Calu3 (cell line): ENCODE measurements at regions of chr7 and their contacts with region 1.

Region 1: DNA sequence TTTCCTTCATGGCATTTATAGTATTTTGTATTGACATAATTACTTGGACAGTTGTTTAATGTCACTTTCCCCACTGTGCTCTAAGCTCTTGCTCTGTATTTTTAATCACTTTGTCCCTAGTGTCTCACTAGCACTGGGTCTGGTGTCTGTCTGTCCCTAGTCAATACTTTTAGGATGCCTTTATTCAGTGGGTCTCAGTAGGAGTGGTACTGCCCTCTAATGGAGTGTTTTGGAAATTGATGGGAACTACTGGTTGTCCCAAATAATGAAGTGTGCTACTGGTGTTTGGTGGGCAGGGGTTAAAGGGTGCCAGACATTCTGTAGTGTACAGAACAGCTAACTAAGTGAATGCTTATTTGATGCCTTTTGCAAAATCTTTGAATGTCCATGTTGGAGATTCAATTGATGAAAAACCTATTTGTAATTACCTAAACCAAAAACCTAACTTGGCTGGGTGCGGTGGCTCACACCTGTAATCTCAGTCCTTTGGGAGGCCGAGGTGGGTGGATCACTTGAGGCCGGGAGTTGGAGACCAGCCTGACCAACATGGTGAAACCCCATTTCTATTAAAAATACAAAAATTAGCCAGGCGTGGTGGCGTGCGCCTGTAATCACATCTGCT is 33.3 kb downstream of the CDK14 start:
- DNase-seq: peak; percentile 34
- H3K4me3 Mint-ChIP-seq: no peak overlapping the region
- H3K27ac Mint-ChIP-seq: no peak overlapping the region
- H3K4me1 Mint-ChIP-seq: peaks cover 21% of the 10 kb centered on the region
- H3K27me3 Mint-ChIP-seq: no peaks in the 10 kb centered on the region
- CTCF ChIP-seq: no peak

Region 2: DNA sequence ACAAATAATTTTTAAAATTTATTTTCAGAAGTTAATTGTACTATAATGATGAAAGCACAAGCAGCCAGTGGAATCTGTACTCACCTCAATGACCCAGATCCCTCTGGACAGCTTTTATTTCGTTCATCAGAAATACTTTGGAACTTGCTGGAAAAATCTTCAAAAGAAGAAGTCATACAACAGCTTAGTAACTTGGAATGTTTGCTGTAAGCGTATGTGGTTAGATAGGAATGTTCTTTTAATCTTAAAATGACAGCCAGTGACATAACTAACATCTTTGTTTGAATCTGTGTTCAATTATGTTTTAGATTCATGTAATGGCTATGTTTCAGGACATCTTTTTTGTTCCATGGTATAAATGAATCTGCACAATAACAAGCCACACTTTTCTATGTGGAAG is 357.7 kb before region 1 on chr7:
- CTCF ChIA-PET with region 1: no interaction called
- intact Hi-C with region 1: no loop called
- DNase-seq: no peak
- H3K4me3 Mint-ChIP-seq: no peak overlapping the region
- H3K27ac Mint-ChIP-seq: no peak overlapping the region
- H3K4me1 Mint-ChIP-seq: peaks cover 13% of the 10 kb centered on the region
- H3K27me3 Mint-ChIP-seq: no peaks in the 10 kb centered on the region
- CTCF ChIP-seq: no peak

Region 3: DNA sequence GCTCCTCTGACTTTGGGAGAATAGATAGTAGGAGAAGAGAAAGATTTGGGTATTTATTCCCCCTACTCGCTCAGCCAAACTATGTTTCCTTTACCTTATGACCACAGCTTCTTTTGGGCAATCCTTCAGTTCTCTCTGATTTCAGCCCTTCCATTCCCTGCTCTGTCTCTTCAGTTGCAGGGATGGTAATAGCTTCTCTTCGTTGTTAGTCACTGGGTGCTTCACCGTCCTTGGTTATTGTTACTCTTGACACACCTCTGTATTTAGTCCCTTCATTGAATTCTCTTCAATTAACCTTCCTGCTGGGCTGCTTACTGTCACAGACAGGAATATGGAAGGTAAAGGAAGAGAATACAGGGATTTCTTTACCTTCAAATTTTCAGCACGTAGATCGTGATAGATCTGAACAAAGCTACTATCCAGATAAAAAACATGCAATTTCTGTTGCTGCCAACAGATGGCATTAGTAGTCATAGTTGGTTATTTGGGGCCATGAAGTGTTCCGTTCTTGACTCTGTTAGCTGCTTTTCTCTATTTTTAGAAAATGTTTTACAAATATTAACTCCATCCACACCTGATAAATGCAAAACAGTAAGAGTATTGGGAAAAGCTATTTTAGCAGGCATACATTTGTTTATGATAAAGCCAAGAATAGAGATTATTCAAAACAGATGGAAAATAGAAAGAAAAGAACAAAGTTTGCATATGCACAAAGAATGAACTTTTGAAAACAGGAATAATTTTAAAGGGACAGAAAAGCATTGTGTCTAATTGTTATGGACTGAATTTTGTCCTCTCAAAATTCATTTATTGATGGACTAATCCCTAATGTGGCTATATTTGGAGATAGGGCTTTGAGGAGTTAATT is 174.0 kb before region 1 on chr7:
- CTCF ChIA-PET with region 1: interaction called, 14 read pairs
- intact Hi-C with region 1: loop called (anchors 2 kb)
- DNase-seq: peak; percentile 8
- H3K4me3 Mint-ChIP-seq: peak overlapping the region; percentile 58
- H3K27ac Mint-ChIP-seq: no peak overlapping the region
- H3K4me1 Mint-ChIP-seq: peaks cover 10% of the 10 kb centered on the region
- H3K27me3 Mint-ChIP-seq: no peaks in the 10 kb centered on the region
- CTCF ChIP-seq: peak; percentile 44

Region 4: DNA sequence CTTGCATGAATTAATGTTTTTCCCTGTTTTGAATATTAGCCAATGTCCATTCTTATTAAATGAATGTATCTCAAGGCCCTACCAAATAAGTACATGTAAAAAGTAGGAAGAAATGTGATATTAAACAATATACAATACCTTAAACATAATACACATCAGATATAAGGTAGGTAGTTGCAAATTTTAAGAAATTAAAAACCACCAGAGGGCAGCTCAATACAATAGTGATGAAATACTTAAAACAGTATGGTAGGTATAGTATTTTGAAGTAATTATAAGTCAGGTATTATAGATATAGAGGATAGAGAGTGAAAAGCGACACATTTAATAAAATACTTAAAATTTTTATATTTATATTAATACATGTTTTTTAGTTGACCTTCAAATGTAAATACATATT is 76.9 kb before region 1 on chr7:
- CTCF ChIA-PET with region 1: no interaction called
- intact Hi-C with region 1: loop called (anchors 2 kb)
- DNase-seq: no peak
- H3K4me3 Mint-ChIP-seq: no peak overlapping the region
- H3K27ac Mint-ChIP-seq: no peak overlapping the region
- H3K4me1 Mint-ChIP-seq: no peaks in the 10 kb centered on the region
- H3K27me3 Mint-ChIP-seq: no peaks in the 10 kb centered on the region
- CTCF ChIP-seq: no peak

Region 5: GRCh38 chr7:90604383-90604782 is 25.0 kb before region 1 on chr7:
- CTCF ChIA-PET with region 1: no interaction called
- intact Hi-C with region 1: no loop called
- DNase-seq: no peak
- H3K4me3 Mint-ChIP-seq: no peak overlapping the region
- H3K27ac Mint-ChIP-seq: no peak overlapping the region
- H3K4me1 Mint-ChIP-seq: peaks cover 12% of the 10 kb centered on the region
- H3K27me3 Mint-ChIP-seq: no peaks in the 10 kb centered on the region
- CTCF ChIP-seq: no peak